ENCODE measurements at regions of chr7 and their contacts with region 1.

Region 1: GRCh38 chr7:80659120-80660055 is 20.9 kb downstream of the CD36 start:
- DNase-seq: no peak
- H3K4me3 ChIP-seq: no peak overlapping the region
- H3K27ac ChIP-seq: no peak overlapping the region
- H3K4me1 ChIP-seq: no peaks in the 10 kb centered on the region
- H3K27me3 ChIP-seq: no peaks in the 10 kb centered on the region
- CTCF ChIP-seq: peak in 2 of 3 experiments; percentile 14 to 52

Region 2: DNA sequence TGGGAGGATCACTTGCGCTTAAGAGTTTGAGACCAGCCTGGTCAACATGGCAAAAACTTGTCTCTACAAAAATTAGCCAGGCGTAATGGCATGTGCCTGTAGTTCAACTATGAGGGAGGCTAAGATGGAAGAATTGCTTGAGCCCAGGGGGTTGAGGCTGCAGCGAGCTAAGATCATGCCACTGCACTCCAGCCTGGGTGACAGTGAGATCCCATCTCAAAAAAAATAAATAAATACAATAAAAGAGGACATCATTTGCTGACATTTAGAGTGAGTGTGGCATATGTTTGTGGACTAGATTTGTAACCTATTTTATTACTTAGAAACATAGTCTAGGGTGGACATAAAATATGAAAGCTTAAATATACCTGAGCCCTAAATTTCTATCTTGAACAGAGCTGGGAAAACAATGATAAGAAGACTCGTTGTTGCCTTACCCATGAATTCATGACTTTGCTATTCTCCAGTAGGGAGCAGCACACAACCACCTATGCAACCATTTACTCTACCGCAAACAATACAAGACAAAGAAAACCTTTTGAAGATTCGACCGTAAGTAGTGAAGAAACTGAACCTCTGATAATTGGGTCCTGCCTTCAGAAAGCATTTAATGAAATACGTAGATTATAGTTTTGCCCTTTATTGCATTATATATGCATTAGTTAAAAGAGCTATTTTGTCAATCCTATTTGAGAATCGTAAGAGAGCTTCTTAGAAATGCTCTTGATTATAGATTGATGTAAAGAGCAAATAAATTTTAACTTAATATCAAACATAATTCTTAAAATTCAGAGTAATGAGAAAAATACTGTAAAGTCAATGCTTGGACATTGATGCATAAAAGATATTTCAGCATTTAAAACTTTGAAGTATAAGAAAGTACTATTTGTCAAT is 231.0 kb before region 1 on chr7:
- dilution Hi-C with region 1: loop called (anchors 25 kb)
- DNase-seq: no peak
- H3K4me3 ChIP-seq: no peak overlapping the region
- H3K27ac ChIP-seq: no peak overlapping the region
- H3K4me1 ChIP-seq: no peaks in the 10 kb centered on the region
- H3K27me3 ChIP-seq: no peaks in the 10 kb centered on the region
- CTCF ChIP-seq: peak; percentile 52 to 57 (median 56)

Region 3: GRCh38 chr7:80764132-80764531 is 104.7 kb after region 1 on chr7:
- dilution Hi-C with region 1: no loop called
- DNase-seq: no peak
- H3K4me3 ChIP-seq: no peak overlapping the region
- H3K27ac ChIP-seq: no peak overlapping the region
- H3K4me1 ChIP-seq: no peaks in the 10 kb centered on the region
- H3K27me3 ChIP-seq: no peaks in the 10 kb centered on the region
- CTCF ChIP-seq: no peak